Testis (tissue), 5 donors: ENCODE measurements at regions of chr12 and their contacts with region 1.

Region 1: DNA sequence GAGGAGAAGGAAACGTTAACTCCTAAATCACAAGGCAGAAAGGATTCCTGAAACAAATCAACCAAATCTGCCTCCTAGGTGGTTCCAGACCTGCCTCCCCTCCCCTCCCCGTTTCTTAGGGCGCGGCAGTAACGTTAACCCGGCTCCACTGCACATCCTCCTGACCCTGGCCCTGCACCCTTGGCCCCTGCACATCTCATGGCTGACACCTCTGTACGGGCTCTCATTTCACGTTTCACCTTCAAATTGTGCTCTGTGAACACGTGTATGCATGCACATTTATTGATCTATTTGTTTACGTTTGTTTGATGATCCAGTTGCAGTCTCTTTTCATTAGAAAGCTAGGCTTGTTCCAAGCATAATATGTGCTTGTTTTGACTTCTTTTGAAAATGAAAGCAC is 358.1 kb downstream of the ADGRD1 start:
- DNase-seq: no peak
- H3K4me3 ChIP-seq: no peak overlapping the region
- H3K27ac ChIP-seq: no peak overlapping the region
- H3K4me1 ChIP-seq: no peaks in the 10 kb centered on the region
- H3K27me3 ChIP-seq: no peaks in the 10 kb centered on the region
- CTCF ChIP-seq: no peak
- POLR2A ChIP-seq: no peak

Region 2: DNA sequence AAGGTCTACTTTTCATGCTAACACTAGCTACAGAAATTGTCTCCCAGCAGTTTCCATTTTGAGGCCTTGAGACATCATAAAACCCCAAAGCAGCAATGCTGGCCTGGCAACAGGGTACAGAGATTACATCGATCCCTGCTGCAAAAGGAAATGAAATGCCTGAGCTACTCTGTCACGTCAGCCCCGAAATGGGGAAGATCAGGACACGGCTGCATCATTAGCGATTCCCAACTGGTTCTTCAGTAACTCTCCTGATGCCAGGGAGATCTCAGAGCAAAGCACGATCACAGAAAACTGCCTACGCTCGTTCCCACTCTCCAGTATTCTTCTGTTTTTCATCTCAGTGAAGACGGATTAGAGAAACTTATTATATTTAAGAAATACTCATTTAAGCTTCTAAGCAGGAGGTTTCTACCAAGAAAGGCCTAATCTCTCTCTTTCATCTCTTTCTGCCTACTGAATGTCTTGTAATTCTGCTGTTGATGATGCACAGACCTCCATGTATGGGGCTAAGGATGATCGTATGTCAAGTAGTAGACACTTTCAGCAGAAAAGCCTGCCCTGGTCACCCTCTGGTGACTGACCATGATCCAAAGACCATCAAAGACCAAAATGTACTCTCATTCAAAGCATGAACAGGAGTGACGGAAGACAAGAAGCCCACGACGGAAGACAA is 764.1 kb before region 1 on chr12:
- intact Hi-C with region 1: loop called (anchors 10 kb)
- DNase-seq: no peak
- H3K4me3 ChIP-seq: no peak overlapping the region
- H3K27ac ChIP-seq: no peak overlapping the region
- H3K4me1 ChIP-seq: no peaks in the 10 kb centered on the region
- H3K27me3 ChIP-seq: no peaks in the 10 kb centered on the region
- CTCF ChIP-seq: no peak
- POLR2A ChIP-seq: no peak

Region 3: DNA sequence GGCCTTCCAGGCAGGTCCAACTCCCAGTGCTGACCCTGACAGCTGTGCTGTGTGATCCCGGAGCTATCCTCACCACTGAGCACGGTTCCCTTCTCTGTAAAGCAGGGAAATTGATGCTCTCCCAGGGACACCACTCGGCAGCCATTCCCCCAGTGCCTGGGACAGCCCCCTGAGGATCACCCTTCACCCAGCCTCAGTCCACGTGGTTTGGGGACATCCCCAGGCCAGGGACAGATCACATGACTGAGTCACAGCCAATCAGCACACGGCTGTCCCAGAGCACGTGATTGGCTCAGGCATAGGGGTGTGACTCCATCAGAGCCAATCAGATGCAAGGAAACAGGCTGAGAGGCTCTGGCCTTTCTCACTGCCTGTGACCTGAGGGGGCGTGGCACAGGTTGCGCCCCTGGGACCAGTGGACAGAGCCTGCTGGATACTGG is 330.4 kb after region 1 on chr12:
- intact Hi-C with region 1: loop called (anchors 5 kb)
- DNase-seq: peak; percentile 71
- H3K4me3 ChIP-seq: peak overlapping the region in 1 of 2 donors; percentile 18
- H3K27ac ChIP-seq: no peak overlapping the region
- H3K4me1 ChIP-seq: peaks cover 6% of the 10 kb centered on the region
- H3K27me3 ChIP-seq: no peaks in the 10 kb centered on the region
- CTCF ChIP-seq: no peak
- POLR2A ChIP-seq: no peak